Mammary epithelial cell (primary cell): ENCODE measurements at regions of chr10 and their contacts with region 1.

Region 1: DNA sequence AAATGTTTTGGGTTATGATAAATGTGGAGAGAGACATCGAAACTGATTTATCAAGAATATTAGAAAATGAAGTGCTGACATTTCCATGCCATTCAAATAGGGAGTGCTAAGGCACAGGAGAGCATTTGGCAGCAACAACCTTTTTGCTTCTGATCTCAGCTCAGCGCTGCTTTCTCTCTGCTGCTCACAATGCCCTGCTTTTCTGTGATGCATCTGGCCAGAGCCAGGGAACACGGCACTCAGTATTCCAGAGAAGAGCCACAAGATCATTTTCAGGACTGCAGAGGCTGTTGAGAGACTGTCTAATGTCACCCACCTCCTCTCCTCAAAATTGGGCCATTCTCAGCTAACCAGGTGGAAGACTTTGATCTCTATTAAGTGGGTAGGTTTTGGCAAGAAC is 28.1 kb downstream of the INSYN2A start:
- DNase-seq: no peak
- H3K4me3 ChIP-seq: no peak overlapping the region
- H3K27ac ChIP-seq: no peak overlapping the region
- H3K4me1 ChIP-seq: peaks cover 6% of the 10 kb centered on the region
- H3K27me3 ChIP-seq: no peaks in the 10 kb centered on the region
- CTCF ChIP-seq: no peak

Region 2: GRCh38 chr10:125248489-125248888 is 1919.8 kb before region 1 on chr10:
- CTCF ChIA-PET with region 1: interaction called, 15 read pairs
- dilution Hi-C with region 1: no loop called
- in situ Hi-C with region 1: no loop called
- intact Hi-C with region 1: no loop called
- DNase-seq: no peak
- H3K4me3 ChIP-seq: no peak overlapping the region
- H3K27ac ChIP-seq: no peak overlapping the region
- H3K4me1 ChIP-seq: no peaks in the 10 kb centered on the region
- H3K27me3 ChIP-seq: no peaks in the 10 kb centered on the region
- CTCF ChIP-seq: no peak

Region 3: GRCh38 chr10:126969310-126969709 is 199.0 kb before region 1 on chr10:
- CTCF ChIA-PET with region 1: no interaction called
- dilution Hi-C with region 1: no loop called
- in situ Hi-C with region 1: no loop called
- intact Hi-C with region 1: no loop called
- DNase-seq: peak; percentile 31
- H3K4me3 ChIP-seq: no peak overlapping the region
- H3K27ac ChIP-seq: no peak overlapping the region
- H3K4me1 ChIP-seq: peaks cover 12% of the 10 kb centered on the region
- H3K27me3 ChIP-seq: no peaks in the 10 kb centered on the region
- CTCF ChIP-seq: peak; percentile 31 to 46

Region 4: GRCh38 chr10:127148066-127148932 is 20.0 kb before region 1 on chr10:
- CTCF ChIA-PET with region 1: no interaction called
- dilution Hi-C with region 1: no loop called
- in situ Hi-C with region 1: no loop called
- intact Hi-C with region 1: no loop called
- DNase-seq: peak; percentile 82
- H3K4me3 ChIP-seq: no peak overlapping the region
- H3K27ac ChIP-seq: peak overlapping the region; percentile 90
- H3K4me1 ChIP-seq: peaks cover 63% of the 10 kb centered on the region
- H3K27me3 ChIP-seq: no peaks in the 10 kb centered on the region
- CTCF ChIP-seq: no peak